CD8-positive, alpha-beta T cell (primary cell): ENCODE measurements at regions of chr17 and their contacts with region 1.

Region 1: DNA sequence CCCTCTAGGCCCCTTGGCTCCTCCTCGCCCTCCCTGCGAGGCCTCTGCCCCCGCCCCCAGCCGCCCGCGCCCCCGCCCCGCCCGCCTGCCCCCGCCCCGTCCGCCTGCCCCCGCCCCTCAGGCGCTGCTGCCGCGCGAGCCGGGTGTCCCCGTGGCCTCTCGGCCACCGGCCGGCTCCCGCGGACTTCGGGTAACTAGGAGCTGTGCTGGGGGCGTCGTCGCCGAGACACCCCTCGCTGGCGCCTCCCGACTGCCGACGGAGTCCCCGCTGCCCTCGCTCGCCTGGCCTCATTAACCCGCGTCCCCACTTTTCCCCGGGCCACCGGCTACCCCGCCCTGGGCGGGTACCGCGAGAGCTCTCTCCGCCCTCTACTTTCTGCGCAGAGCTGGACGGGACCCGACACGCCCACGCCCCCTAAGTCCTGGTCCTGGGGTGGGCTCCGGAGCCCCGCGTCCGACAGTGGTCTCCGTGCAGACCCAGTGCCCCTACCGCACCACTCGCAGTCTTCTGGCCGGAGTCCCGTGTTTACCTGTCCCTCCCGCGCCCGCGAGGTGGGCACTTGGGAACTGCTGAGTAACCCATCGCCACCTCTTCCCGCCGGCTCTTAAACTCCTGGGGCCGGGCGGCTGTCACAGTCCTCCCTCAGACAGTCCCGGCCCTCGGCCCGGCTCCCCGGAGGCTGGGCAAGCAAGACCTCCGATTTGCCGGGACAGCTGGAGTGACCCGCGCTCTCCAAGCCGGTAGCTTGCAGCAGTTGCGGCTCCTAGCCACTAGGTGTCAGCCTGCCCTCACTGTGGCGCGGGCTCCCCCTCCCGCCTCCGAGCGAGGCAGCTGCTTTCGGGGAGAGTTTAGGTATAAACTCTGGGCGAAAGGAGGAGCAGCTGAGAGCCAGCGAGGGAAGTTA is at the start of gene TLCD1:
- DNase-seq: peak; percentile 82 to 94 (median 91)
- ATAC-seq: peak; percentile 43
- H3K4me3 ChIP-seq: peak within 1 kb of the TSS; percentile 88 to 92
- H3K4me3 Mint-ChIP-seq: peak within 1 kb of the TSS; percentile 97
- H3K27ac ChIP-seq: peak within 1 kb of the TSS; percentile 43 to 98
- H3K27ac Mint-ChIP-seq: peak within 1 kb of the TSS; percentile 99
- H3K4me1 ChIP-seq: peaks cover 38% of the 10 kb centered on the region
- H3K4me1 Mint-ChIP-seq: peaks cover 59% of the 10 kb centered on the region
- H3K27me3 ChIP-seq: no peaks in the 10 kb centered on the region
- H3K27me3 Mint-ChIP-seq: no peaks in the 10 kb centered on the region
- CTCF ChIP-seq: peak; percentile 99
- total RNA-seq, gene TLCD1: 0.73 to 1.1 TPM

Region 2: DNA sequence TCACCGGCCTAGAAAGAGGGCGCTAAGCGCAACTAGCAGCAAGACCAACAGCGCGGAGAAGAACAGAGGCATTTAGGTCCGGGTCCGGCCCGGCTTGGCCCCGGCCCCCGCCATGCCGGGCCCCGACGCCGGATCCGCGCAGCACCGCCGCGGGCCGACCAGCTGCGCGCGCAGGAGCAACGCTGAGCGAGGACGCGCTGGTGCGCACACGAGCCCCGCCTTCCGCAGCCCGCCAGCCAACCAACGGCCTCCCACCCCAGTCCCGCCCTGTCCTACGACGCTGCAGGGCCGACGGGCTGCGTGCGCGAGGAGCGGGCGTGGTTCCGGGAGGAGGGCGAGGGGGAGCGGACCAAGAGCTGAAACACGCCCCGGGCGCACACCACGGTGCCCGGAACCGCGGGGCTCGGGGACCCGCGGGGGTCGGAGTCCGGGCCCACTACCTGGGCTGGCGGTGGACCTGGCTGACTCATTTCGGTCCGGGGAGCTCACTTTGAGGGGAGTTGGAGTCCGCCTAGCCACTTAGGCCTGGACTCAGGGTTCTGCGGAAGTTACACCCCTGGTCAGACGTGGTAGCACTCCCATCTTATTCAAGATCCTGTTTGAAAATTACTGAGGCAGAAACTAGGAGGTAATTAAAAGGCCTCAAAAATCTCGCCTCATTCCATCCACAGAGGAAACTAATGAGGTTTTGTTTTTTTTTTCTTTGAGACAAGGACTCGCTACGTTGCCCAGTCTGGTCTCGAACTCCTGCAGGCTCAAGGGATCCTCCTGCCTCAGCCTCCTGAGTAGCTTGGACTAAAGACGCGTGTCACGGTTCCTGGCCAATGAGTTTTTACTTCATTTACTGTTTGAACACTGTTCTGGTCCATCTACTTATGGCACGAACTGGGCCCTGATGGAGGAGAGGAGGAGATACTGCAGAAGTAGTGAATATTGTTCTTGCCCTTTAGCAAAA is 81.2 kb before region 1 on chr17 and contains the start of gene BLTP2:
- CTCF ChIA-PET with region 1: interaction called, 9 read pairs
- POLR2A ChIA-PET with region 1: interaction called, 3 read pairs
- intact Hi-C with region 1: loop called (anchors 1 to 5 kb)
- DNase-seq: peak; percentile 91 to 98 (median 96)
- ATAC-seq: peak; percentile 98
- H3K4me3 ChIP-seq: peak within 1 kb of the TSS; percentile 81 to 82
- H3K4me3 Mint-ChIP-seq: peak within 1 kb of the TSS; percentile 90
- H3K27ac ChIP-seq: peak within 1 kb of the TSS; percentile 75 to 89
- H3K27ac Mint-ChIP-seq: peak within 1 kb of the TSS; percentile 95
- H3K4me1 ChIP-seq: peaks cover 34% of the 10 kb centered on the region
- H3K4me1 Mint-ChIP-seq: peaks cover 46% of the 10 kb centered on the region
- H3K27me3 ChIP-seq: no peaks in the 10 kb centered on the region
- H3K27me3 Mint-ChIP-seq: no peaks in the 10 kb centered on the region
- CTCF ChIP-seq: no peak
- total RNA-seq, gene BLTP2: 136 to 148 TPM

Region 3: GRCh38 chr17:28743225-28744103 is 17.0 kb after region 1 on chr17 and contains the start of gene TRAF4:
- CTCF ChIA-PET with region 1: interaction called, 532 read pairs
- POLR2A ChIA-PET with region 1: interaction called, 187 read pairs
- intact Hi-C with region 1: loop called (anchors 1 kb)
- DNase-seq: peak; percentile 44 to 91 (median 74)
- ATAC-seq: peak; percentile 87
- H3K4me3 ChIP-seq: peak within 1 kb of the TSS; percentile 69 to 72
- H3K4me3 Mint-ChIP-seq: peak within 1 kb of the TSS; percentile 88
- H3K27ac ChIP-seq: peak within 1 kb of the TSS; percentile 62 to 82
- H3K27ac Mint-ChIP-seq: peak within 1 kb of the TSS; percentile 84
- H3K4me1 ChIP-seq: peaks cover 33% of the 10 kb centered on the region
- H3K4me1 Mint-ChIP-seq: peaks cover 28% of the 10 kb centered on the region
- H3K27me3 ChIP-seq: no peaks in the 10 kb centered on the region
- H3K27me3 Mint-ChIP-seq: no peaks in the 10 kb centered on the region
- CTCF ChIP-seq: no peak
- total RNA-seq, gene TRAF4: 418 to 439 TPM

Region 4: GRCh38 chr17:28842282-28843012 is 116.0 kb after region 1 on chr17 and contains the start of gene FAM222B:
- CTCF ChIA-PET with region 1: interaction called, 4 read pairs
- POLR2A ChIA-PET with region 1: interaction called, 4 read pairs
- intact Hi-C with region 1: loop called (anchors 2 kb)
- DNase-seq: peak; percentile 68 to 94 (median 83)
- ATAC-seq: peak; percentile 98
- H3K4me3 ChIP-seq: peak within 1 kb of the TSS; percentile 62 to 91
- H3K4me3 Mint-ChIP-seq: peak within 1 kb of the TSS; percentile 97
- H3K27ac ChIP-seq: peak within 1 kb of the TSS; percentile 65 to 79
- H3K27ac Mint-ChIP-seq: peak within 1 kb of the TSS; percentile 94
- H3K4me1 ChIP-seq: peaks cover 16% of the 10 kb centered on the region
- H3K4me1 Mint-ChIP-seq: peaks cover 25% of the 10 kb centered on the region
- H3K27me3 ChIP-seq: no peaks in the 10 kb centered on the region
- H3K27me3 Mint-ChIP-seq: no peaks in the 10 kb centered on the region
- CTCF ChIP-seq: no peak
- total RNA-seq, gene FAM222B: 20.2 to 20.6 TPM

Region 5: DNA sequence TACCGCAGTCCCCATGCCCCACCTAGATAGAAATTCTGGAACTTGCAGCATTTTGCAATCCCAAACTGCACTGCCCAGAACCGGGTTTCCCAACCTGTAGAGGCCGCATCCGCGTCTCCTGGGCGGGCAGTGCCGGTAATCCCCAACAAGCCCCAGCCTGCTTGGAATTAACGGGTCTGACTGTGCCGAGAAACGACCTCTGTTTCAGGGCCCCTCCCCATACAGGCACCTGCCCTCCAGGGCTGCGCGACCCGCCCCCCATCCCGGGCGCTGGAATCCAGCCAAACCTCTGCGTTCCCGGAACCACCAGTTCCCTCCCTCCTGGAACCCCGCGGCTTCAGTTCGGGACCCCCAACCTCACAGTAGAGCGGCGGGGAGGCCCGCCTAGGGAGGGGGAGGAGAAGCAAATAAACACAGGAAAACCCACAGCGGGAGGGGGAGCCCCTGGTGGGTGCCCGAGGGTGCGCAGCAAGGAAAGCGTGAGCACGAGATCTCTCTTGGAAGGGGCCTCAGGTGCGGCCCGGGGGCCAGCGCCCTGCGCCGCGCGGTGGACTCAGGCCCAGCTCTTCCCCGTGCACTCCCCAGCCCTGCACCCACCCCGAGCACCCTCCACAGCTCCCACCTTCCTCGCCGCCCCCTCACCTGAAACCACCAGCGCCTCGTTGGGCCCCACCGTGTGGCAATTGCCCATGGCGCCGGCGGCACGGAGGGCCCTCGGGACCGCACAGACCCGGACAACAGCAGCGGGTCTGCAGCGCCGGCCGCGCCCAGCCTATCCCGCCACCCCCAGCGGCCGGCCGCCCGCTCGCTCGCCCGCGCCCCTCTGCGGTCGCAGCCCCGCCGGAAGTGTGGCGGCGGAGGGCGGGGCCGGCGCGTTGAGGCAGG is 170.6 kb after region 1 on chr17 and contains the start of gene FLOT2:
- CTCF ChIA-PET with region 1: interaction called, 18 read pairs
- POLR2A ChIA-PET with region 1: interaction called, 6 read pairs
- intact Hi-C with region 1: loop called in 1 of 2 experiments (anchors 2 kb)
- DNase-seq: peak; percentile 37 to 86 (median 75)
- ATAC-seq: peak; percentile 78
- H3K4me3 ChIP-seq: peak within 1 kb of the TSS; percentile 77 to 81
- H3K4me3 Mint-ChIP-seq: peak within 1 kb of the TSS; percentile 96
- H3K27ac ChIP-seq: peak within 1 kb of the TSS; percentile 85 to 88
- H3K27ac Mint-ChIP-seq: peak within 1 kb of the TSS; percentile 96
- H3K4me1 ChIP-seq: peaks cover 63% of the 10 kb centered on the region
- H3K4me1 Mint-ChIP-seq: peaks cover 62% of the 10 kb centered on the region
- H3K27me3 ChIP-seq: no peaks in the 10 kb centered on the region
- H3K27me3 Mint-ChIP-seq: no peaks in the 10 kb centered on the region
- CTCF ChIP-seq: peak; percentile 43
- total RNA-seq, gene FLOT2: 69.7 to 71.6 TPM

Region 6: GRCh38 chr17:28925912-28926365 is 199.5 kb after region 1 on chr17:
- CTCF ChIA-PET with region 1: interaction called, 9 read pairs
- POLR2A ChIA-PET with region 1: no interaction called
- intact Hi-C with region 1: loop called in 1 of 2 experiments (anchors 2 kb)
- DNase-seq: peak; percentile 31 to 96 (median 58)
- ATAC-seq: peak; percentile 90
- H3K4me3 ChIP-seq: no peak overlapping the region
- H3K4me3 Mint-ChIP-seq: peak overlapping the region; percentile 32
- H3K27ac ChIP-seq: peak overlapping the region; percentile 87 to 96
- H3K27ac Mint-ChIP-seq: peak overlapping the region; percentile 97
- H3K4me1 ChIP-seq: peaks cover 35% of the 10 kb centered on the region
- H3K4me1 Mint-ChIP-seq: peaks cover 60% of the 10 kb centered on the region
- H3K27me3 ChIP-seq: no peaks in the 10 kb centered on the region
- H3K27me3 Mint-ChIP-seq: no peaks in the 10 kb centered on the region
- CTCF ChIP-seq: no peak

Region 7: GRCh38 chr17:29293890-29294579 is 567.6 kb after region 1 on chr17 and contains the start of gene NUFIP2:
- CTCF ChIA-PET with region 1: no interaction called
- POLR2A ChIA-PET with region 1: no interaction called
- intact Hi-C with region 1: loop called in 1 of 2 experiments (anchors 5 kb)
- DNase-seq: peak; percentile 94 to 100 (median 99)
- ATAC-seq: peak; percentile 86
- H3K4me3 ChIP-seq: peak within 1 kb of the TSS; percentile 93 to 94
- H3K4me3 Mint-ChIP-seq: peak within 1 kb of the TSS; percentile 99
- H3K27ac ChIP-seq: peak within 1 kb of the TSS; percentile 70 to 89
- H3K27ac Mint-ChIP-seq: peak within 1 kb of the TSS; percentile 98
- H3K4me1 ChIP-seq: peaks cover 40% of the 10 kb centered on the region
- H3K4me1 Mint-ChIP-seq: peaks cover 42% of the 10 kb centered on the region
- H3K27me3 ChIP-seq: no peaks in the 10 kb centered on the region
- H3K27me3 Mint-ChIP-seq: no peaks in the 10 kb centered on the region
- CTCF ChIP-seq: no peak
- total RNA-seq, gene NUFIP2: 67.9 to 71.8 TPM